Naive thymus-derived CD4-positive, alpha-beta T cell (primary cell): ENCODE measurements at regions of chr1 and their contacts with region 1.

Region 1: GRCh38 chr1:193537266-193538002 is 351.0 kb upstream of the B3GALT2 start:
- DNase-seq: peak in 7 of 9 donors; percentile 23 to 54 (median 45)
- ATAC-seq: peak; percentile 77
- H3K4me3 ChIP-seq: peak overlapping the region; percentile 32
- H3K4me3 Mint-ChIP-seq: peak overlapping the region in 9 of 10 donors; percentile 17 to 65 (median 44)
- H3K27ac ChIP-seq: no peak overlapping the region
- H3K27ac Mint-ChIP-seq: peak overlapping the region in 5 of 9 donors; percentile 2 to 89 (median 45)
- H3K4me1 ChIP-seq: peaks cover 14 to 41% of the 10 kb centered on the region in 2 donors
- H3K4me1 Mint-ChIP-seq: peaks cover 13 to 57% (median 46%) of the 10 kb centered on the region in 7 donors
- H3K27me3 ChIP-seq: no peaks in the 10 kb centered on the region
- H3K27me3 Mint-ChIP-seq: no peaks in the 10 kb centered on the region

Region 2: GRCh38 chr1:192580351-192580962 is 957.0 kb before region 1 on chr1:
- CTCF ChIA-PET with region 1: no interaction called
- POLR2A ChIA-PET with region 1: no interaction called
- intact Hi-C with region 1: loop called in 1 of 2 experiments (anchors 10 kb)
- DNase-seq: peak in 3 of 9 donors; percentile 15 to 44 (median 38)
- ATAC-seq: peak; percentile 40
- H3K4me3 ChIP-seq: no peak overlapping the region
- H3K4me3 Mint-ChIP-seq: peak overlapping the region in 2 of 10 donors; percentile 31 to 40
- H3K27ac ChIP-seq: no peak overlapping the region
- H3K27ac Mint-ChIP-seq: peak overlapping the region in 2 of 9 donors; percentile 8 to 43
- H3K4me1 ChIP-seq: peaks cover 7 to 15% of the 10 kb centered on the region in 2 donors
- H3K4me1 Mint-ChIP-seq: peaks cover 8 to 44% (median 28%) of the 10 kb centered on the region in 7 donors
- H3K27me3 ChIP-seq: no peaks in the 10 kb centered on the region
- H3K27me3 Mint-ChIP-seq: peaks cover 0 to 2% (median 0%) of the 10 kb centered on the region in 5 donors

Region 3: GRCh38 chr1:193406901-193407300 is 130.5 kb before region 1 on chr1:
- CTCF ChIA-PET with region 1: no interaction called
- POLR2A ChIA-PET with region 1: no interaction called
- intact Hi-C with region 1: loop called (anchors 1 to 2 kb)
- DNase-seq: peak in 6 of 9 donors; percentile 30 to 54 (median 48)
- ATAC-seq: peak; percentile 70
- H3K4me3 ChIP-seq: no peak overlapping the region
- H3K4me3 Mint-ChIP-seq: peak overlapping the region in 3 of 10 donors; percentile 3 to 11 (median 5)
- H3K27ac ChIP-seq: no peak overlapping the region
- H3K27ac Mint-ChIP-seq: peak overlapping the region in 5 of 9 donors; percentile 0 to 68 (median 10)
- H3K4me1 ChIP-seq: peaks cover 4 to 11% of the 10 kb centered on the region in 2 donors
- H3K4me1 Mint-ChIP-seq: peaks cover 11 to 34% (median 24%) of the 10 kb centered on the region in 7 donors
- H3K27me3 ChIP-seq: no peaks in the 10 kb centered on the region
- H3K27me3 Mint-ChIP-seq: no peaks in the 10 kb centered on the region

Region 4: GRCh38 chr1:193462629-193463320 is 74.7 kb before region 1 on chr1:
- CTCF ChIA-PET with region 1: interaction called, 3 read pairs
- POLR2A ChIA-PET with region 1: no interaction called
- intact Hi-C with region 1: loop called in 1 of 2 experiments (anchors 2 kb)
- DNase-seq: peak in 3 of 9 donors; percentile 3 to 33 (median 20)
- ATAC-seq: peak; percentile 72
- H3K4me3 ChIP-seq: peak overlapping the region; percentile 19
- H3K4me3 Mint-ChIP-seq: peak overlapping the region; percentile 3 to 82 (median 72)
- H3K27ac ChIP-seq: no peak overlapping the region
- H3K27ac Mint-ChIP-seq: peak overlapping the region; percentile 28 to 87 (median 65)
- H3K4me1 ChIP-seq: peaks cover 12 to 20% of the 10 kb centered on the region in 2 donors
- H3K4me1 Mint-ChIP-seq: peaks cover 18 to 41% (median 35%) of the 10 kb centered on the region in 7 donors
- H3K27me3 ChIP-seq: no peaks in the 10 kb centered on the region
- H3K27me3 Mint-ChIP-seq: no peaks in the 10 kb centered on the region

Region 5: GRCh38 chr1:193525917-193526710 is 11.3 kb before region 1 on chr1:
- CTCF ChIA-PET with region 1: interaction called, 3 read pairs
- POLR2A ChIA-PET with region 1: interaction called, 6 read pairs
- intact Hi-C with region 1: loop called in 1 of 2 experiments (anchors 2 kb)
- DNase-seq: no peak
- ATAC-seq: no peak
- H3K4me3 ChIP-seq: no peak overlapping the region
- H3K4me3 Mint-ChIP-seq: no peak overlapping the region
- H3K27ac ChIP-seq: no peak overlapping the region
- H3K27ac Mint-ChIP-seq: no peak overlapping the region
- H3K4me1 ChIP-seq: no peaks in the 10 kb centered on the region
- H3K4me1 Mint-ChIP-seq: peaks cover 0 to 8% (median 0%) of the 10 kb centered on the region in 7 donors
- H3K27me3 ChIP-seq: no peaks in the 10 kb centered on the region
- H3K27me3 Mint-ChIP-seq: no peaks in the 10 kb centered on the region

Region 6: GRCh38 chr1:193569096-193569982 is 31.9 kb after region 1 on chr1:
- CTCF ChIA-PET with region 1: no interaction called
- POLR2A ChIA-PET with region 1: interaction called, 6 read pairs
- intact Hi-C with region 1: loop called in 1 of 2 experiments (anchors 1 kb)
- DNase-seq: peak in 4 of 9 donors; percentile 2 to 31 (median 16)
- ATAC-seq: peak; percentile 67
- H3K4me3 ChIP-seq: no peak overlapping the region
- H3K4me3 Mint-ChIP-seq: peak overlapping the region in 5 of 10 donors; percentile 4 to 63 (median 23)
- H3K27ac ChIP-seq: no peak overlapping the region
- H3K27ac Mint-ChIP-seq: peak overlapping the region in 6 of 9 donors; percentile 34 to 89 (median 78)
- H3K4me1 ChIP-seq: peaks cover 4 to 16% of the 10 kb centered on the region in 2 donors
- H3K4me1 Mint-ChIP-seq: peaks cover 12 to 24% (median 19%) of the 10 kb centered on the region in 7 donors
- H3K27me3 ChIP-seq: no peaks in the 10 kb centered on the region
- H3K27me3 Mint-ChIP-seq: no peaks in the 10 kb centered on the region

Region 7: DNA sequence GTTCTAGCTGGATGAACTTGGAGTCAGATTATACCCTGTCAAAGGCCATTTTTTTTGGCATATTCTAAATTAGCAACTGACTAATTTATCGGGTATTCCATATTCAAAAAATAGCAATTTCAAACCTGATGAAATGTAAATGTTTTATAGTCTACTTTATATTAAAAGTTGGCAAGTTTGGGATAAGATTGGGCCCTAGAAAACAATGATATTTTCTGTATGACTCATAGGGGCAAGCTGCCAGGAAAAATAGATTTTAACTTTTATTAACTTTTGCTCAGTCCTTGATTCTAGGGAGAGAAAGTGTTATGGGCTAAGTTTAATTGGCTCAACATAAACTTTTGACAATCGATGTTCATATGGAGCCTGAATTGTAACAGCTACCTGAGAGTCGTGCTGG is 225.8 kb after region 1 on chr1:
- CTCF ChIA-PET with region 1: no interaction called
- POLR2A ChIA-PET with region 1: no interaction called
- intact Hi-C with region 1: loop called in 1 of 2 experiments (anchors 5 kb)
- DNase-seq: no peak
- ATAC-seq: no peak
- H3K4me3 ChIP-seq: no peak overlapping the region
- H3K4me3 Mint-ChIP-seq: no peak overlapping the region
- H3K27ac ChIP-seq: no peak overlapping the region
- H3K27ac Mint-ChIP-seq: no peak overlapping the region
- H3K4me1 ChIP-seq: no peaks in the 10 kb centered on the region
- H3K4me1 Mint-ChIP-seq: no peaks in the 10 kb centered on the region
- H3K27me3 ChIP-seq: no peaks in the 10 kb centered on the region
- H3K27me3 Mint-ChIP-seq: no peaks in the 10 kb centered on the region